Calu3 (cell line): ENCODE measurements at regions of chr2 and their contacts with region 1.

Region 1: DNA sequence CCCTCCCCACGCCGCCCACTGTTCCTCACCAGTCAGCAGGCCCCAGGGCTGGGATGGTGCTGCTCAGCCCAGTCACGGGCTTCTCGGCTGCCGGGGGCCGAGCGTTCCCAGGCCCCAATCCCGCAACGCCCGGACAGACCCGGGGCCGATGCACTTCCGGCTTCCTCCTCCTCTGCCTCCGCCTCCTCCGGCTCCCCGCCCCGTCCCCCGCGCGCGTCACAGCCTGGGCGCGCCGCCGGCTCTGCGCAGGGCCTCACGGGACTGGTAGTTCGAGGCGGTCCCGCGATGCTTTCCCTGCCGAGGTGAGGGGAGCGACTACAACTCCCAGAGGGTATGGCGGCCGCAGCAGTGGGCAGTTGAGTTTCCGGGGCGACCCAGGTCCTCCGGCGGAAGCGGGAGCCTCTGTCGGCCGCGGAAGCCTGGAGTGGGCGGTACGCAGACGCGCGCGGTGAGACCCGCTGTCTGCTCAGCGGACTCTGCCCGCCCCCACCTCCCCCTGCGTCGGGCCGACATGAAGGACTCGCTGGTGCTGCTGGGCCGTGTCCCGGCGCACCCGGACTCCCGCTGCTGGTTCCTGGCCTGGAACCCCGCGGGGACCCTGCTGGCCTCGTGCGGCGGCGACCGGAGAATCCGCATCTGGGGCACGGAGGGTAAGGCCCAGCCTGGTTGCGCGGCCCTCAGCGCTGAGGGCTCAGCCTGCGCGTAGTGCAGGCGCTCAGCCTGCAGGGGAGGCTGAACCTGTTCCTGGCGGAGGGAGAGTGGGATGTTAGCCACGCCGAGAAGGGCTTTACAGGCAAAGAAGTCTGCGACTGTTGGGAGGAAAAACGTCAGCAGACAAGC is at the starts of genes CIAO1 and TMEM127:
- DNase-seq: peak; percentile 98
- H3K4me3 Mint-ChIP-seq: peak within 1 kb of the TSS; percentile 88
- H3K27ac Mint-ChIP-seq: peak within 1 kb of the TSS; percentile 66
- H3K4me1 Mint-ChIP-seq: peaks cover 23% of the 10 kb centered on the region
- H3K27me3 Mint-ChIP-seq: no peaks in the 10 kb centered on the region
- CTCF ChIP-seq: no peak
- total RNA-seq, gene CIAO1: 75.7 and 85.9 TPM in 2 replicates
- total RNA-seq, gene TMEM127: 50.7 and 53.2 TPM in 2 replicates

Region 2: DNA sequence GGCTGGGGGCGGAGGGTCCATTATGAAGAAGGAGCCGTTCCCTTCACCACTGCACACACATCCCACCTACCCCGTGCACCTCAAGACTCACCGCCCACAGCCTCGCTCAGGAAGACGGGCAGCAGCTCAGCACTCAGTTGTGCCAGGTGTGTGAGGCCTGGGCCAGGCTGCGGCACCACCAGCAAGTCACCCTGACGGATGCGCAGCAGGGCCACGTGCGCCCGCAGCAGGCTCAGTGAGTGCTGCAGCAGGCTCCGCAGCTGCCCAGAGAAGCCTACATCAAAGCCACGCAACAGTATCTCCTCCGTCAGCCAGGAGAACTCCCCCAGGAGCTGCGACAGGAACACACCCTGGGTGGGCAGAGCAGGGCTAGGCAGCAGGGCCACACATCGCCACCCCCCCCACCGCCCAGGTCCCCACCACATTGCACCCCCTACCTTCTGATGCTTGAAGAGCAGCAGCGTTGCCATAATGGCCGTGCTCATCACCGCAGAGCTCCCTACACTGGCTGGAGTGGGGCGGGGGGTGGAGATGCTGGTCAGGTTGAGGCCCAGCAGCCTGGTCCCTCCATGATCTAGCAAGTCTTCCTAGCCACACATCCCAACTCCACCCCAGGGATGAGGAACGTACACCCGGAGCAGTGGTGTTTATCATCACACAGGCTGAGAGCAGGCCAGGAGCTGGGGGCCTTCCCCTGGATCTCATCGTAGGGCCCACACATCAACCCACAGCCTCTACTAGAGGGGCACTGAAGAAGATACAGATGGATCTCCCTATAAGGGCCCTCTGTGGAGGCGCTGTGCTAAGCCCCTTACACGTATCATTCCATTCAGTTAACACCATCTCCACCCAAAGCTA is 241.5 kb before region 1 on chr2:
- CTCF ChIA-PET with region 1: no interaction called
- intact Hi-C with region 1: loop called (anchors 10 kb)
- DNase-seq: no peak
- H3K4me3 Mint-ChIP-seq: no peak overlapping the region
- H3K27ac Mint-ChIP-seq: no peak overlapping the region
- H3K4me1 Mint-ChIP-seq: no peaks in the 10 kb centered on the region
- H3K27me3 Mint-ChIP-seq: no peaks in the 10 kb centered on the region
- CTCF ChIP-seq: no peak

Region 3: DNA sequence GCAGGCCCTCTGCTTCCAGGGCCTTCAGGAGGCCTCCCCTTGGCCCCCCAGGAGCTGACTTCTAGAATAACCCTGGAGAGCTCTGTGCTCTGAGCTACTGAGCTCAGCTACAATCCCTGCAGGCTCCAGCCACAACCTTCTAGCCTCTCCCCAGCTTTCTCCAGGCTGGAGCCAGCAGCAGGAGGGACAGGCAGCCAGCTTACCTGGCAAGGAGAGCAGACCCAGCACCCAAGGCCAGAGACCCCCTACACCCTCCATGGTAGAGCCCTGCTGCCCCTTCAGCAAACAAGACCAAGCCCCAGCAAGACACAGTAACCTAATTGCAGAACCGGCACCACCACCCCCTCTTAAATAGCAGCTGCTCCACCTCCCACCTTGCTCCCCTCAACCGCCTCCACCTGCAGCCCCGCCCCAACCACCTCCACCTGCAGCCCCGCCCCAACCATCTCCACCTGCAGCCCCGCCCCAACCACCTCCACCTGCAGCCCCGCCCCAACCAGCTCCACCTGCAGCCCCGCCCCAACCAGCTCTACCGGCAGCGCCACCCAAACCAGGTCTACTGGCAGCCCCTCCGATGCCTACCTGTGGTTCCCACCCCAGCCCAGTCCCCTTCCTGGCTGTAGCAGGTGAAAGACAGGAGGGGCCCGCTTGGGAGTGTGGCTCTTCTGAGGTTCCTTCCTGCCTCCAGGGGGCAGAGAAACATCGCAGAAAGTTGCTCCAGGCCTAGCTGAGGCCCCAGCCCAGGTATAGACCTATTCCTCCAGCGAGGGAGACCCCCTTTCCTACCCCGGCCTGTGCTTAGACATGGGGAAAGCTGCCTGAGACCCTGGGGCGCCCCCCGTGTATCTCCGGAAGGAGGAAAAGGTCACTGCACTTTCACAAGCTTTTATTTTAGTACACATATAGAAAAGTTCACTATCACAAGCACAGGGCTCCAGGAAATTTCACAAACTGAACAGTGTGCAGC is 127.6 kb before region 1 on chr2 and contains the start of gene ASTL:
- CTCF ChIA-PET with region 1: interaction called, 7 read pairs
- intact Hi-C with region 1: loop called (anchors 10 kb)
- DNase-seq: peak; percentile 75
- H3K4me3 Mint-ChIP-seq: peak within 1 kb of the TSS; percentile 30
- H3K27ac Mint-ChIP-seq: no peak within 1 kb of the TSS
- H3K4me1 Mint-ChIP-seq: no peaks in the 10 kb centered on the region
- H3K27me3 Mint-ChIP-seq: peaks cover 42% of the 10 kb centered on the region
- CTCF ChIP-seq: peak; percentile 60
- total RNA-seq, gene ASTL: not detected in 2 replicates

Region 4: GRCh38 chr2:96325041-96325883 is 59.2 kb after region 1 on chr2 and contains the start of gene ITPRIPL1:
- CTCF ChIA-PET with region 1: no interaction called
- intact Hi-C with region 1: no loop called
- DNase-seq: peak; percentile 10
- H3K4me3 Mint-ChIP-seq: peak within 1 kb of the TSS; percentile 56
- H3K27ac Mint-ChIP-seq: no peak within 1 kb of the TSS
- H3K4me1 Mint-ChIP-seq: no peaks in the 10 kb centered on the region
- H3K27me3 Mint-ChIP-seq: peaks cover 34% of the 10 kb centered on the region
- CTCF ChIP-seq: no peak
- total RNA-seq, gene ITPRIPL1: 1.2 and 1.7 TPM in 2 replicates